ENCODE measurements at regions of chr1 and their contacts with region 1.

Region 1: GRCh38 chr1:89041119-89041641 is 18.5 kb upstream of the GBP3 start:
- DNase-seq: no peak
- H3K4me3 Mint-ChIP-seq: peak overlapping the region; percentile 0
- H3K27ac Mint-ChIP-seq: peak overlapping the region; percentile 14
- H3K4me1 Mint-ChIP-seq: peaks cover 34% of the 10 kb centered on the region
- H3K27me3 Mint-ChIP-seq: peaks cover 16% of the 10 kb centered on the region

Region 2: GRCh38 chr1:88983791-88984559 is 57.2 kb before region 1 on chr1:
- intact Hi-C with region 1: loop called (anchors 2 kb)
- DNase-seq: no peak
- H3K4me3 Mint-ChIP-seq: peak overlapping the region; percentile 41
- H3K27ac Mint-ChIP-seq: peak overlapping the region; percentile 44
- H3K4me1 Mint-ChIP-seq: peaks cover 73% of the 10 kb centered on the region
- H3K27me3 Mint-ChIP-seq: no peaks in the 10 kb centered on the region

Region 3: DNA sequence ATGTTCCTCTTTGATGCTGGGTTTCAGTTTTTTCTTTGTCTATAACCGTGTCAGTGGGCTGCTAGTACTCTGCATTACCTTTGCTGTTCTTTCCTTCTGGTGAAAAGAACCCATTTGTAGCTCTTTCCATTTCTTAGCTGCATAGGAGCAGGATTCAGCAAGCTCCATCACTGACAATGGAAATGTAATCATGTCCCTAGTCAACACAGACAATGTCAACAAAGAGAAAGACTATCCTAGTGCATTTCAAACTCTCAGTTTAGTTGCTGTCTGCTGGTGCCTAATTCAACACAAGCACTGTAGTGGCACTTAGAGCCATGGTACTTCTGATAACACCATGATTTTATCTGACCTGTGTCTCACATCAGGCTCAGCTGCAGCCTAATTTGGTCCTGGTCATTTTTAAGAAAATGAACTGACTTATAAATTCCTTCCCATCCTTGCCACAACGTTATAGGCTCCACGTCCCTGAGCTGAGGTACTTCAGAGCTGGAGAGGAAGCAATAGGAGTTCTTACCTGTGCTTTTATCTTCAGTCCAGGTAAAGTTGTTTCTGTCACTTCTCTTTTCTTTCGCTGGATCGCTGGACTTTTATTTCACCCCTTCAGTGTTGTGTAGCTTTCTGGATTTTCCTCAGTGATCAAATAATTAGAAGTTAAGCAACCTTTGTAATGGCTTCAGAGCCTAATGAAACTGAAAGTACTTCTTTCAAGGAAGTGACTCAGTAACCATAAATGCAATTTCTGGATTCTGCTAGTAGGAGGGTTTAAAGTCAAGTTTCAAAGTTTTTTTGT is 18.8 kb before region 1 on chr1 and contains the start of gene GBP3:
- intact Hi-C with region 1: loop called (anchors 2 kb)
- DNase-seq: no peak
- H3K4me3 Mint-ChIP-seq: peak within 1 kb of the TSS; percentile 93
- H3K27ac Mint-ChIP-seq: peak within 1 kb of the TSS; percentile 79
- H3K4me1 Mint-ChIP-seq: peaks cover 46% of the 10 kb centered on the region
- H3K27me3 Mint-ChIP-seq: no peaks in the 10 kb centered on the region
- total RNA-seq, gene GBP3: 6.4 and 7.5 TPM in 2 replicates

Region 4: GRCh38 chr1:89065079-89065868 is 24.1 kb after region 1 on chr1 and contains the start of gene GBP1:
- intact Hi-C with region 1: loop called (anchors 1 kb)
- DNase-seq: no peak
- H3K4me3 Mint-ChIP-seq: peak within 1 kb of the TSS; percentile 81
- H3K27ac Mint-ChIP-seq: peak within 1 kb of the TSS; percentile 86
- H3K4me1 Mint-ChIP-seq: peaks cover 59% of the 10 kb centered on the region
- H3K27me3 Mint-ChIP-seq: no peaks in the 10 kb centered on the region
- total RNA-seq, gene GBP1: 35.3 and 40.0 TPM in 2 replicates

Region 5: GRCh38 chr1:89125913-89126580 is 84.9 kb after region 1 on chr1 and contains the start of gene GBP2:
- intact Hi-C with region 1: loop called (anchors 1 kb)
- DNase-seq: no peak
- H3K4me3 Mint-ChIP-seq: peak within 1 kb of the TSS; percentile 97
- H3K27ac Mint-ChIP-seq: peak within 1 kb of the TSS; percentile 99
- H3K4me1 Mint-ChIP-seq: peaks cover 61% of the 10 kb centered on the region
- H3K27me3 Mint-ChIP-seq: no peaks in the 10 kb centered on the region
- total RNA-seq, gene GBP2: 71.9 and 74.1 TPM in 2 replicates

Region 6: DNA sequence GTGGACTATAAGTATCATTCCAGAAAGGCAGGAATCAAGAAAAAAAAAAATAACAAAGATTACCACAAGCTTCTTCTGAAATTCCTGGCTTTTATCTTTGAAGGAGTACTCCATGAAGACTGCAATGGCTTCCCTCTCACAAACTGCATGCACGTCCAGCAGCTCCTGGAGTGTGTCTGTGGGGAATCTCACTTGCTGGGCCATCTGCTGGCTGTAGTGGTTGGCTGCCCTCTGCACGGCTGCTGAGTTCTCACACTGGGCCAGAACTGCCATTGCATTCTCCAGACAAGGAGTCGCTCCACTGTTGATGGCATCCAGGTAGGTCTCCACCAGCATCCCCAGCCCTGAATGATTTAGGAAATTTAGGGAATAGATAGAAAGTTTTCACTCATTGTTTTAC is 108.0 kb after region 1 on chr1:
- intact Hi-C with region 1: no loop called
- DNase-seq: no peak
- H3K4me3 Mint-ChIP-seq: no peak overlapping the region
- H3K27ac Mint-ChIP-seq: no peak overlapping the region
- H3K4me1 Mint-ChIP-seq: peaks cover 14% of the 10 kb centered on the region
- H3K27me3 Mint-ChIP-seq: peaks cover 6% of the 10 kb centered on the region

Measured in activated T-helper 2 cell treated with anti-CD3 and anti-CD28 coated beads, Interferon-gamma antibody, Interleukin-2, Interleukin-4, amounts not matched to agents 10 μg/mL and 5 μg/mL and 100 μg/mL, durations not matched to agents 14 hours and 24 hours and 36 hours (primary cell).